Mammary epithelial cell (primary cell): ENCODE measurements at regions of chr2 and their contacts with region 1.

Region 1: DNA sequence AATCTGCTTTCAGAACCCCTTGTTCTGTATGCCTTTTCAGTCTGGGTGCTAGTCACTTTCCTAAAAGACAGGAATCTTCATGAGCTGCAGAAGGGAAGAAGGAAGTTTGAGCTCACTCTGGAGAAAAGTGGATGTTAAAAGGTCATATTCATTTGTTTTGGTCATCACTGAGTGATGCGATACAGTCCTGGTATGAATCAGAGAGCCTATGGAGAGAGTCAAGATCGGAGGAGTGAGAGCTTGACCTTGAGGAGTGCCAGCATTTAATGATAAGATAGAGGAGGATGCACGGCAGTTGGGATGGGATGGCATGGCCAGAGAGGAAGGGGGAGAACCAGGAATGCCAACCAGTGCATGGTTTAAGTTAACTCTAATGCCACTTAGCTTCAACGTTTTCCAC is 19.6 kb downstream of the USP39 start:
- DNase-seq: no peak
- H3K4me3 ChIP-seq: no peak overlapping the region
- H3K27ac ChIP-seq: no peak overlapping the region
- H3K4me1 ChIP-seq: no peaks in the 10 kb centered on the region
- H3K27me3 ChIP-seq: no peaks in the 10 kb centered on the region
- CTCF ChIP-seq: no peak

Region 2: DNA sequence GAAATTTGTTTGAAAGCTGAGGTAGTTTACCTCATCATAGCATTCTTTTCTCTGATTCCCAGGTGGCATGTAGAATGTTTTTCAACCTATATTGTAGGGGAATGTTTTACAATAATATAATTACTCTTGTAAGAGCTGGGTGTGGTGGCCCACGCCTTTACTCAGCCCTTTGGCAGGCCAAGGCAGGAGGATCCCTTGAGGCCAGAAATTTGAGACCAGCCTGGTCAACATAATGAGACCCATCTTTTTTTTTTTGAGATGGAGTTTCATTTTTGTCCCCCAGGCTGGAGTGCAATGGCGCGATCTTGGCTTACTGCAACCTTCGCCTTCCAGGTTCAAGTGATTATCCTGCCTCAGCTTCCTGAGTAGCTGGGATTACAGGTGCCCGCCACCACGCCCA is 16.0 kb before region 1 on chr2:
- CTCF ChIA-PET with region 1: interaction called, 39 read pairs
- dilution Hi-C with region 1: no loop called
- in situ Hi-C with region 1: no loop called
- intact Hi-C with region 1: no loop called
- DNase-seq: no peak
- H3K4me3 ChIP-seq: no peak overlapping the region
- H3K27ac ChIP-seq: no peak overlapping the region
- H3K4me1 ChIP-seq: peaks cover 10% of the 10 kb centered on the region
- H3K27me3 ChIP-seq: no peaks in the 10 kb centered on the region
- CTCF ChIP-seq: no peak